Natural killer cell (primary cell): ENCODE measurements at regions of chr22 and their contacts with region 1.

Region 1: DNA sequence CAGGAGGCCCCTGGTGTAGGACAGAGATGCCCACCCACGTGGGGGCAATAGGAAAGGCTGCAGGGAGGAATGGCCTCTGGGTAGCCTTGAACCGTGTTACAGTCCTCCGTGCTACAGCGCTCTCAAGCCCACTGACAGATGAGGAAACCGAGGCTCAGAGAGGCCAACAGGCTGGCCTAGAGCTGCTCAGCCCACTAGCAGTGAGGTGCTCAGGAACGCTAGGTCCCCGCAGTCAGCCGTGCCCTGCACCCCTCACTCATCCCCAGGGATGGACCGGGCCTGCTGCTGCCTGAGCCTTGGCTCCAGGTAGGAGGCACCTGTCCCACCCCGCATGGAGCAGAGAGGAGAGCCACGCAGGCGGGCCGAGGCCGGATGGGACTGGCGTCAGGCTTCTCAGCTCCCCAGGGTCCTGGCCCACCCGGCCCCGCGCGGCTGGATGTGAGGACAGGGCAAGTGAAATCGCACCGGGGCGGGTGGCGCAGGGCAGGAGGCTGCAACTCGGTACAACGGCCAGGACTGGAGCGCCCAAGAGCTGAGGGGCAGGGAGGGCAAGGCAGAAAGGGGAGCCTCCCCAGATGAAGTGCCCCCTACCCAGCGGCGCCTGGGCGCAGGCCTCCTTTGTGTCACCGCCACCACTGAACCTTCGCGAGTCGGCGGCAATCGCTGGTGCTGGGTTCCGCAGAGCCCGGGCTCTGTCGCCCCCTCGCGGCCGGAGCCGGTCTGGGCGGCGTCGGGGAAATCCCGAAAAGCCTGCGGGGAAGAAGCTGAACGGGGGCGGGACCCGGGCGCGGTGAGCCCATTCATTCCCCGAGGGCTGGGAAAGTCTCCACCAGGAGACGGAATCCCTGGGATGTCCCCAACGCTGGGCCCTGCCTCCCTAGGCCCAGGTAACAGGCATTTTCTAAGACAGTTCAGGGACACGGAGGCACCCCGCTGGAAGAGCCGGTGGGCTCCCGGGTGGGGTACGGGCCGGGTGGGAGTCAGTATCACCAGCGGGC is 8.4 kb upstream of the SLC2A11 start:
- DNase-seq: peak; percentile 90 to 91
- ATAC-seq: peak; percentile 92 to 99 (median 98)
- H3K4me3 ChIP-seq: no peak overlapping the region
- H3K4me3 Mint-ChIP-seq: no peak overlapping the region
- H3K27ac ChIP-seq: no peak overlapping the region
- H3K27ac Mint-ChIP-seq: peak overlapping the region in 1 of 2 donors; percentile 54
- H3K4me1 ChIP-seq: peaks cover 37% of the 10 kb centered on the region
- H3K4me1 Mint-ChIP-seq: peaks cover 0 to 8% of the 10 kb centered on the region in 2 donors
- H3K27me3 ChIP-seq: no peaks in the 10 kb centered on the region
- H3K27me3 Mint-ChIP-seq: no peaks in the 10 kb centered on the region
- CTCF ChIP-seq: peak; percentile 97

Region 2: DNA sequence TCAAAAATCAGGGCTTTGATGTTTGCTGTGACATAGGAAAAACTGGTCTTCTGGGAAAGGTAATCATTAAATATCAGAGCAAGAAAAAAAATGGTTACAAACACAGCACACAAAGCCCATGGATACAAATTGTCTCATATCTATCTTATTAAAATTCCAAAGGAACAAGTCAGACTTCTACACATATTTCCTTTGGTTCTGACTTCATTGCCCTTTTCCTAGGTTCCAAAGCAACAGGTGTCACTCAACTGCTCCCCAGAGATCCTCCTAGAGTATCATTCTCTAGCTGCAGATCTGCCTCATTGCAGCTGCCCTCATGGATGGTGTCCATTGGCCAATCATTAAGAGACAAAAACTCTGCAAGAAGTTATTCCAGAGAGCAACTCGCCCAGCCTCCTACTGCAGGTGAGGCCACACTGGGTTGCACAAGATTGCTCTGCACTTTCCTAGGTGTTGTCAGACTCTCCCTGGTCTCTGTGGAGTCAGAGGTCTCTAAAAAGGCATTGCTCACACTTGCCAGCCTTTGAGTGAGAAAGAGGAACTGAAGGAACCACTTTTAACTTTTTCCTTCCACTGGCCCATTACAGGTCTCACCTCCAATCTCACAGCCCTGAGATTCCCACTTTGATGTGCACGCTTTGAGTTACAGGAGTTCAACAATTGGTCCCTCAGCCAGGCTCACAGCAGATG is 222.9 kb before region 1 on chr22:
- intact Hi-C with region 1: loop called (anchors 5 kb)
- DNase-seq: no peak
- ATAC-seq: no peak
- H3K4me3 ChIP-seq: no peak overlapping the region
- H3K4me3 Mint-ChIP-seq: no peak overlapping the region
- H3K27ac ChIP-seq: no peak overlapping the region
- H3K27ac Mint-ChIP-seq: no peak overlapping the region
- H3K4me1 ChIP-seq: no peaks in the 10 kb centered on the region
- H3K4me1 Mint-ChIP-seq: peaks cover 4 to 5% of the 10 kb centered on the region in 2 donors
- H3K27me3 ChIP-seq: no peaks in the 10 kb centered on the region
- H3K27me3 Mint-ChIP-seq: no peaks in the 10 kb centered on the region
- CTCF ChIP-seq: no peak

Region 3: DNA sequence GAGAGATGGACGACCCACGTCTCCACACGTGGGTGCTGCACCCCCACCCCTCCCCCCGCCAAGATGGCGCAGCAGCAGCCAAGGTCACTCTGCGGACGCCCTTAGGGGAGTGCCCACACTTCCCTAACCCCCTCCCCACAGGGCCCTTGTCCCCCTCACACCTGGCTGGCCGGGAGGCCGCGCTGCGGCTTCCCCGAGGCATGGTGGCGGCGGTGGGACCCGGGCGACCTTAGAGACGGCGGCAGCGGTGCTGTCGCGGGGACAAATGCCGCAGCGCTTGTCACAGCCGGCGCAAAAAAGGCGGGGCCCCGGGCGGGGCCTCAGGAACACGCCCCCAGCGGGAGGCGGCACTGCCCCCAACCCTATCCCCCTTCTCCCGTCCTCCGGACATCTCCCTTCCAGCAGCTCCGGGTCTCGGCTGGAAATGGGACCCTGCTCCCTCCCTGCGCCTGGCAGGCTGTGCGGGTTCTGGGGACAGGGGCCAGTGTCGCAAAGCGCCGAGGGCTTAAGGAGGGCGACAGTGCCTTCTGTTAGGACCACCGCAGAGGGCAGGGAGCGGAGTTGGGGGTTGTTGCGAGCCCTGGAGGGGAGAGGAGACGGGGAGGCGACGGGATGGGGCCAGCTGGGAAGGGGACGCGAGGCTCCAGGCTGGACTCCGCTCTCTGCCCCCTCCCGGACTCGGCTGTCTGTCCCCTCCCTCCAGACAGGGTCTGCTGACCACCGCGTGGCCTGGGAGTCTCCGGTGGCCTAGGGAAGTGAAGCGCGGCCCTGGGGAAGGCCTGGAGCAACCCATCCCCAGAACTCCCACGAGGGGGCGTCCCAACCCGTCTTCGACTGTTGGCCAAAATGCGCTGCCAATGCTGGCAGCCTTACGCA is 81.4 kb before region 1 on chr22 and contains the start of gene CHCHD10:
- intact Hi-C with region 1: loop called (anchors 5 kb)
- DNase-seq: peak; percentile 73 to 83
- ATAC-seq: peak; percentile 70 to 82 (median 72)
- H3K4me3 ChIP-seq: peak within 1 kb of the TSS; percentile 57
- H3K4me3 Mint-ChIP-seq: peak within 1 kb of the TSS; percentile 78
- H3K27ac ChIP-seq: peak within 1 kb of the TSS; percentile 49
- H3K27ac Mint-ChIP-seq: peak within 1 kb of the TSS in 1 of 2 donors; percentile 72
- H3K4me1 ChIP-seq: peaks cover 77% of the 10 kb centered on the region
- H3K4me1 Mint-ChIP-seq: peaks cover 16 to 42% of the 10 kb centered on the region in 2 donors
- H3K27me3 ChIP-seq: no peaks in the 10 kb centered on the region
- H3K27me3 Mint-ChIP-seq: no peaks in the 10 kb centered on the region
- CTCF ChIP-seq: peak; percentile 65
- total RNA-seq, gene CHCHD10: 9.3 to 22.5 (median 13.8) TPM

Region 4: GRCh38 chr22:23888615-23889401 is 39.5 kb after region 1 on chr22:
- intact Hi-C with region 1: no loop called
- DNase-seq: no peak
- ATAC-seq: no peak
- H3K4me3 ChIP-seq: no peak overlapping the region
- H3K4me3 Mint-ChIP-seq: no peak overlapping the region
- H3K27ac ChIP-seq: no peak overlapping the region
- H3K27ac Mint-ChIP-seq: no peak overlapping the region
- H3K4me1 ChIP-seq: peaks cover 6% of the 10 kb centered on the region
- H3K4me1 Mint-ChIP-seq: peaks cover 12 to 17% of the 10 kb centered on the region in 2 donors
- H3K27me3 ChIP-seq: no peaks in the 10 kb centered on the region
- H3K27me3 Mint-ChIP-seq: no peaks in the 10 kb centered on the region
- CTCF ChIP-seq: no peak